ENCODE measurements at regions of chr21 and their contacts with region 1.

Region 1: DNA sequence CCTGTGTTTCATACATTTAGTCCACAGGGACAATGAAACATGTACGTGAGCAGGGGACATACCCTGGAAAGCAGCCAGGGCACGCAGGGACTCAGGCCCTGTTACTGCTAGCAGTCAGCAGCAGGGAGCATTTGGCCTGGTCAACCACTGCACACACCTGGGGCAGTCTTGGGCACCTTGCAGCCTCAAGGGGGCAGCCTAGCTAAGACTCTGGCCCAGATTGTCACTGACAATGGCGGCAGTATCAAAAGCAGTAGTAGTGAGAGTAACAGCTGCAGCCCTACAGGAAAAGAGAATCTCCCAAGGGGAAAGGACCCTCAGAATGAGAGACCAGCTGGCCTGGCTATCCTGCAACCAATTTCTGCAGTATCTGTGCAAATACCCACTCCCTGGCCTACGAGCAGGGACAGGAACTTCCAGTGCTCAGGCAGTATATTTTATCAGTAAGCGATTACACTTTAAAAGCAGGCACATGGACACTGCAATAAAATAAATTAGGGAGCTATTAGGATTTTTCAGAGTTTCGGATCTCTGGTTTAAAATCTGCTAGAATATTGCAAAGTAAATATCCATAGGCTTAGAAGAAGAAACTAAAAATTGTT is 475.6 kb downstream of the LTN1 start:
- DNase-seq: peak; percentile 67
- H3K4me3 ChIP-seq: no peak overlapping the region
- H3K27ac ChIP-seq: no peak overlapping the region
- H3K4me1 ChIP-seq: peaks cover 0 to 4% (median 0%) of the 10 kb centered on the region in 4 donors
- H3K27me3 ChIP-seq: no peaks in the 10 kb centered on the region
- CTCF ChIP-seq: peak; percentile 44 to 54 (median 53)
- EP300 ChIP-seq: no peak
- POLR2A ChIP-seq: no peak

Region 2: GRCh38 chr21:28111151-28111619 is 405.9 kb before region 1 on chr21:
- in situ Hi-C with region 1: no loop called
- intact Hi-C with region 1: no loop called
- DNase-seq: peak; percentile 39
- H3K4me3 ChIP-seq: no peak overlapping the region
- H3K27ac ChIP-seq: peak overlapping the region; percentile 27 to 38 (median 33)
- H3K4me1 ChIP-seq: peaks cover 0 to 7% (median 0%) of the 10 kb centered on the region in 4 donors
- H3K27me3 ChIP-seq: no peaks in the 10 kb centered on the region
- CTCF ChIP-seq: no peak
- EP300 ChIP-seq: no peak
- POLR2A ChIP-seq: no peak

Region 3: DNA sequence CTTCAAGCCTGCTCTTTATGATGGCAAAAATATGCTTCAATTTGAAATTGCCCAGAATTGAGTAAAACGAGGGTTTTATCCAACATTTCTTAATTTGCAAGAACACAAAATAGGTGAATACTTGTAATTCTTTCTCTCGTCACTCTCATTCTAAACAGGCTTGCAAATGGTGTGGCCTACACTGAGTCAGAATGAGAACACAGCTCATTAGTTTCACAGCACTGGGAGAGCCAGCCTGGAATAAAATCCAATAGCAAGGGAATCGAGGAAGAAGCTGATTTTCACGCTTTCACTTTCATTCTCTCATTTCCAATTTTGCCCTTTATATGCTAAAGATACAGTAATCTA is 61.9 kb before region 1 on chr21:
- in situ Hi-C with region 1: no loop called
- intact Hi-C with region 1: loop called (anchors 2 kb)
- DNase-seq: no peak
- H3K4me3 ChIP-seq: no peak overlapping the region
- H3K27ac ChIP-seq: no peak overlapping the region
- H3K4me1 ChIP-seq: no peaks in the 10 kb centered on the region
- H3K27me3 ChIP-seq: no peaks in the 10 kb centered on the region
- CTCF ChIP-seq: no peak
- EP300 ChIP-seq: no peak
- POLR2A ChIP-seq: no peak

Region 4: GRCh38 chr21:28537371-28538079 is 20.4 kb after region 1 on chr21:
- in situ Hi-C with region 1: no loop called
- intact Hi-C with region 1: no loop called
- DNase-seq: no peak
- H3K4me3 ChIP-seq: no peak overlapping the region
- H3K27ac ChIP-seq: no peak overlapping the region
- H3K4me1 ChIP-seq: no peaks in the 10 kb centered on the region
- H3K27me3 ChIP-seq: no peaks in the 10 kb centered on the region
- CTCF ChIP-seq: no peak
- EP300 ChIP-seq: no peak
- POLR2A ChIP-seq: no peak

Region 5: DNA sequence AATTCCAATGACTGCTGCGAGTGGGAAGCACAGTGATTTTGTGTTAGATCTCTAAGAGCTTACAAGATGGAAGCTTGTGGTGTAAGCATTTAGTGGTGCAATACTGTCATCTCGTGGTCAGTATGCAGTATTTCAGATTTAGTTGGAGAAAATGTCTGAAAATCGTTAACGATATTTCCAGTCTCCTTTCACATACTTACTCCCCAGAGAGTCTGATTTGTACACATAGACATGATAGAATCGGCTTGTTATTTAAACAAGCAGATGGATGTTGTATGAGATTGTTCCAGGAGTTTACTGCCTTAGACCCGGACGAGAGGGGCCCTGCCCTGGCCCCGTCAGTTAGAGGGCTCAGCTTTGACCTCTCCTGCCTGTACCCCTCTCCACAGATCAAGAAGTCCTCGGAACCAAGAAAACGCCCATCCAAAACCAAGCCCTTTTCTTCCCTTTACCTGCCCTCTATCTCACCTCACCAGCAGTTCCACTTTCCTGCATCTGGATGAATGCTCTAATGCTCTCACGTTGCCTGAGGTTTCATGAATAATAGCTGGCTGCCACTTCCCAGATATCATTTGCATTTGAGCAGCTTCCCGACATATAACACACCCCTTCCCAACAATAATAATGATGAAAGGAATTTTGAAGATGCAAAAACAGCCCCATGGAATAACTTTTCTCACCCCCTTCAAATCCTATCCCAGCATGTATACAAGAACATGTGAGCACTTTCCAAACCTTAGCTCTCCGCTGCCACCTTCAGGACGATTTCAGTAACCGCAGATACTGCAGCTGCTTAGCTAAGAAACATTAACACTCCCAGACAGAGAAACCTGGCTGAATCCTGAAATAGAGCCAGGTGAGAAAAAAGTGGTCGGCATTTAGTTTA is 228.3 kb after region 1 on chr21:
- in situ Hi-C with region 1: loop called in 2 of 4 experiments (anchors 10 to 25 kb)
- intact Hi-C with region 1: loop called (anchors 10 kb)
- DNase-seq: peak; percentile 78
- H3K4me3 ChIP-seq: peak overlapping the region; percentile 17 to 58 (median 36)
- H3K27ac ChIP-seq: peak overlapping the region; percentile 48 to 70 (median 62)
- H3K4me1 ChIP-seq: peaks cover 0 to 9% (median 2%) of the 10 kb centered on the region in 4 donors
- H3K27me3 ChIP-seq: no peaks in the 10 kb centered on the region
- CTCF ChIP-seq: peak; percentile 88 to 99 (median 93)
- EP300 ChIP-seq: no peak
- POLR2A ChIP-seq: no peak

Region 6: GRCh38 chr21:28943631-28944030 is 426.5 kb after region 1 on chr21:
- in situ Hi-C with region 1: loop called in 1 of 4 experiments (anchors 25 kb)
- intact Hi-C with region 1: loop called (anchors 5 kb)
- DNase-seq: no peak
- H3K4me3 ChIP-seq: no peak overlapping the region
- H3K27ac ChIP-seq: no peak overlapping the region
- H3K4me1 ChIP-seq: peaks cover 0 to 3% (median 0%) of the 10 kb centered on the region in 4 donors
- H3K27me3 ChIP-seq: no peaks in the 10 kb centered on the region
- CTCF ChIP-seq: no peak
- EP300 ChIP-seq: no peak
- POLR2A ChIP-seq: no peak

Region 7: DNA sequence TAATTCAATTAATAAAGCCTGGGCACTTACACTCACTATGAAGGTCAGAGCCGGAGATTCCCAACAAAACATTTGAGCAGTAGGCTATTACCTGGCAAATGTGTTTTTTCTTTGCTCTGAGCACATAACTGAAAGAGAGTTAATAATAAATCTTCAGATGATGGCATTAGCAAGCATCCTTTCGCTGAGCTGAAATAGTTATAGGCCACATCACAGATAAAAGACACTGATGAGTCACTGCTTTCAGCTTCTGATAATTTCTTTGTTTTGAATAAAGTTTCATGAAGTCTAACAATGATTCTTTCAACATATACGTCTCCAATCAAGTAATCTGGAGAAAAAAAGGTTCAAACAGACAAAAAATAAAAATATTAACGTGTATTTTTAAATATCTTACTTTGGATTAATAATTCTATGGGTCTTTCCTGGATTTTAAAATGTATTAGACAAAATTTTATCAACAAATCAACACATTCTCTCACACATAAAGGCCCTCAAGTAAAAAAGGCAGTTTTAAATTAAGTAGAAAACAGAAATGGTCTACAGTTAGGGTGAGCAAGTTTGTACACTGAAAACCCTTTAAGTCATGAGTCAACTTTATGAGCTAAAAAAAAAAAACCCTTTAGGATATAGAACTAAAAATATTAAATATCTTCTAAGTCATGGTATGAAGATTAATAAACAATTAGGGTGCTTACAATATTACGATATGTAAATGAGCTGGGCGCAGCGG is 442.4 kb after region 1 on chr21:
- in situ Hi-C with region 1: loop called in 1 of 4 experiments (anchors 25 kb)
- intact Hi-C with region 1: no loop called
- DNase-seq: no peak
- H3K4me3 ChIP-seq: no peak overlapping the region
- H3K27ac ChIP-seq: no peak overlapping the region
- H3K4me1 ChIP-seq: no peaks in the 10 kb centered on the region
- H3K27me3 ChIP-seq: no peaks in the 10 kb centered on the region
- CTCF ChIP-seq: no peak
- EP300 ChIP-seq: no peak
- POLR2A ChIP-seq: no peak